Activated B cell treated with CpG ODN at 0.5 μM for 24 hours (primary cell): ENCODE measurements at regions of chr19 and their contacts with region 1.

Region 1: DNA sequence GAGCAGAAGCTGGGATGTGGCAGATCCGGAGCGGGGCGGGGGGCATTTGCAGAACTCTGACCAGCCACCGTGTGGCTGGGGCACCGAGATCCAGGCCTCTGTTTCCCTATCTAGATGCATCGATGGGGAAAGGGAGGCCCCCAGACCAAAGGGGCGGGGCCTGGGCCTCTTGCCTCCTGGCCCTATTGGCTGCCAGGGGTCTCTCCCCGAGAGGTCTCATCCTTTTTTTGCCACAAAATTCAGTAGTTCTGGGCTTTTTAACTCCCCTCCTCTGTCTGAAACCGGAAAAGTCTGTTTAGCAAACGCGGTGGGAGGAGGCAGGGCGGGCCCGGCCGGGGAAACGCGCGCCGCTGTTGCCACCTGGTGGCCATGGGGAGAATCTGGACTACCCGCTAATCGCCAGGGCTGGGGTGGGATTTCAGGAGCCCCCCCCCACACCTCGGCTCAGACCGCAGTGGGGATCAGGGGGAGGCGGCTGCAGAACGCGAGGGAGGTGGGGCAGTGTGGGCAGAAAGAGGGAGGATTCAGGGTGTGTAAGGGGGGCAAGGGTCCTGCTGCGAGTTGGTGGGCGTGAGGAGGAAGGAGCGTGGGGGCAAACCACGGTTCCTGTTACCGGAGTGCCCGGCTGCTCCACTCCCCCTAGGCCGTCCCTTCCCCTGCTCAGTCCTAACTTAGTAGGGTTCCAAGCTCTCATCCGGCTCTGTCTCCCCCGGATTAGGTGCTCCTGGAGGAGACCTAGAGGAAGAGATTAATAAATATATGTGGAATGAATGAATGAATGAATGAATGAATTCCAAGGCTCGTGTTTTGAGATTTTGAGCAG is 28.3 kb downstream of the IL12RB1 start:
- DNase-seq: peak; percentile 81
- ATAC-seq: peak; percentile 93
- H3K4me3 Mint-ChIP-seq: peak overlapping the region; percentile 58
- H3K27ac Mint-ChIP-seq: peak overlapping the region; percentile 76
- H3K4me1 Mint-ChIP-seq: peaks cover 21% of the 10 kb centered on the region
- H3K27me3 Mint-ChIP-seq: no peaks in the 10 kb centered on the region
- CTCF ChIP-seq: peak; percentile 88

Region 2: GRCh38 chr19:17830567-17831418 is 227.6 kb before region 1 on chr19:
- CTCF ChIA-PET with region 1: no interaction called
- POLR2A ChIA-PET with region 1: no interaction called
- intact Hi-C with region 1: no loop called
- DNase-seq: no peak
- ATAC-seq: peak; percentile 72
- H3K4me3 Mint-ChIP-seq: no peak overlapping the region
- H3K27ac Mint-ChIP-seq: no peak overlapping the region
- H3K4me1 Mint-ChIP-seq: no peaks in the 10 kb centered on the region
- H3K27me3 Mint-ChIP-seq: no peaks in the 10 kb centered on the region
- CTCF ChIP-seq: no peak

Region 3: DNA sequence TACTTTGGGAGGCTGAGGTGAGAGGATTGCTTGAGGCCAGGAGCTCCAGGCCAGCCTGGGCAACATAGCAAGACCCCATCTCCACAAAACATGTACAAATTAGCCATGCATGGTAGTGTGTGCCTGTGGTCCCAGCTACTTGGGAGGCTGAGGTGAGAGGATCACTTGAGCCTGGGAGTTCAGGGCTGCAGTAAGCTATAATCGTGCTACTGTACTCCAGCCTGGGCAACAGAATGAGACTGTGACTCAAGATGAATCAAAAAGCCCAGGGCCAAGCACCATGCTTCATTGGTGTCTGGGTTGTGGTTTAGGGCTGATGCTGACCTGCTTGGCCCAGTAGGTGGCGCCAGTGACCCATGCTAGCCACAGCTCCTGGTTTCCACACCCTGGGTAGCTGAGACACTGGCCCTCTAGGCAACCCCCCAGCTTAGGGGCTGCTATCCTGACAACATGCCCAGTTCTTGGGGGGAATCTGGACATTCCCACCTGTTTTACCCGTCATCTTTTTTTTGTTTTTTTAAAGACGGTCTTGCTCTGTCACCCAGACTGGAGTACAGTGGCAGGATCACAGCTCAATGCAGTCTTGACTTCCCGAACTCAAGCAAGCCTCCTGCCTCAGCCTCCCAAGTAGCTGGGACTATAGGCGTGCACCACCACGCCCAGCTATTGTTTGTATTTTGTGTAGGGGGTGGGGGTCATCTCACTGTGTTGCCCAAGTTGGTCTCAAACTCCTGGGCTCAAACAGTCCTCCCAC is 120.2 kb before region 1 on chr19:
- CTCF ChIA-PET with region 1: interaction called, 7 read pairs
- POLR2A ChIA-PET with region 1: interaction called, 3 read pairs
- intact Hi-C with region 1: loop called (anchors 1 kb)
- DNase-seq: peak; percentile 78
- ATAC-seq: peak; percentile 98
- H3K4me3 Mint-ChIP-seq: no peak overlapping the region
- H3K27ac Mint-ChIP-seq: no peak overlapping the region
- H3K4me1 Mint-ChIP-seq: peaks cover 10% of the 10 kb centered on the region
- H3K27me3 Mint-ChIP-seq: no peaks in the 10 kb centered on the region
- CTCF ChIP-seq: no peak

Region 4: DNA sequence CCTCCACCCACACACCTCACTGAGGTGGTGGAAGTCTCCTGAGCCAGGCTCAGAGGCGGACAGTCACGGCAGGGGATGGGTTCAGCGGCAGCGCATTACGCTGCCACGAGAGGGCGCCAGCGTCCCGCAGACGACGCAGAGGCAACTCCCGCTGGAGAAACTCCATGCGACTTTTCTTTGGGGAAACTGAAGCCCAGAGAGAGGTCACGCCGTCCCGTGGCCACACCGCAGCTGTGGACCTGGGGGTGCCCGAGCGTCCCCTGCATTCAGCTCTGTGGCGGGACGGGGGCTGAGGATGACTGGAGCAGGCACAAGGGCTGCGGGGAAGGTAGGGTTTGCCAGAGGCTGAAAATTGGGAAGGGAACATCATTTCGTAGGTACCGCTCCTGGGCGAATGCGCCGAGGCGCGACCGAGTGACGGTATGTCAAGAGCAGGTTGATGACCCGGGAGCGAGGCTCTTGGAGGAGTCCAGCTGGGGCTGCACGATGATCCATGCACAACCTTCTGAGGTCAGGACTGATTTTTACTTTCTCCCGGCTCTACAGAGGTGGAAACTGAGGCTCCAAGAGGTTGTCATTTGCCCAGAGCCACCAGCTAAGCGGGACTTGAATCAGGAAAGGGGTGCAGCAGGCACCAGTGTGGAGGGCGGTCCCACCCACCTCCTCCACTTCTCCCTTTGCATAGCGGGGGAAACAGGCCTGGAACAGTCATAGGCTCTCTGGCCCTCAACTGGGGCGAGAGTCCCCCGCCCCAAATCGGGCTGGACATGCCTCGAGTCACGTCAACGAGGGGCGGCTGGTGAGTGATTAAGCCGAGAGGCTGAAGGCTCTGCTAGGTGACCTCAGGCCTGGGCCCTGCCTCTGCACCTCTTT is 51.1 kb before region 1 on chr19:
- CTCF ChIA-PET with region 1: interaction called, 91 read pairs
- POLR2A ChIA-PET with region 1: interaction called, 190 read pairs
- intact Hi-C with region 1: loop called (anchors 1 kb)
- DNase-seq: peak; percentile 83
- ATAC-seq: peak; percentile 61
- H3K4me3 Mint-ChIP-seq: peak overlapping the region; percentile 93
- H3K27ac Mint-ChIP-seq: peak overlapping the region; percentile 92
- H3K4me1 Mint-ChIP-seq: peaks cover 40% of the 10 kb centered on the region
- H3K27me3 Mint-ChIP-seq: no peaks in the 10 kb centered on the region
- CTCF ChIP-seq: peak; percentile 84

Region 5: GRCh38 chr19:18044825-18045304 is 13.6 kb before region 1 on chr19:
- CTCF ChIA-PET with region 1: interaction called, 4 read pairs
- POLR2A ChIA-PET with region 1: interaction called, 65 read pairs
- intact Hi-C with region 1: loop called (anchors 1 kb)
- DNase-seq: peak; percentile 72
- ATAC-seq: peak; percentile 92
- H3K4me3 Mint-ChIP-seq: peak overlapping the region; percentile 78
- H3K27ac Mint-ChIP-seq: peak overlapping the region; percentile 96
- H3K4me1 Mint-ChIP-seq: peaks cover 55% of the 10 kb centered on the region
- H3K27me3 Mint-ChIP-seq: no peaks in the 10 kb centered on the region
- CTCF ChIP-seq: no peak